Ascending aorta (tissue), 2 donors: ENCODE measurements at regions of chr1 and their contacts with region 1.

Region 1: GRCh38 chr1:63691701-63692425 is 82.0 kb upstream of the ROR1 start:
- DNase-seq: peak in 1 of 2 donors; percentile 86
- H3K4me3 ChIP-seq: no peak overlapping the region
- H3K27ac ChIP-seq: peak overlapping the region; percentile 61 to 62
- H3K4me1 ChIP-seq: peaks cover 5 to 12% of the 10 kb centered on the region in 2 donors
- H3K27me3 ChIP-seq: no peaks in the 10 kb centered on the region
- CTCF ChIP-seq: peak; percentile 82 to 84 (median 82)

Region 2: DNA sequence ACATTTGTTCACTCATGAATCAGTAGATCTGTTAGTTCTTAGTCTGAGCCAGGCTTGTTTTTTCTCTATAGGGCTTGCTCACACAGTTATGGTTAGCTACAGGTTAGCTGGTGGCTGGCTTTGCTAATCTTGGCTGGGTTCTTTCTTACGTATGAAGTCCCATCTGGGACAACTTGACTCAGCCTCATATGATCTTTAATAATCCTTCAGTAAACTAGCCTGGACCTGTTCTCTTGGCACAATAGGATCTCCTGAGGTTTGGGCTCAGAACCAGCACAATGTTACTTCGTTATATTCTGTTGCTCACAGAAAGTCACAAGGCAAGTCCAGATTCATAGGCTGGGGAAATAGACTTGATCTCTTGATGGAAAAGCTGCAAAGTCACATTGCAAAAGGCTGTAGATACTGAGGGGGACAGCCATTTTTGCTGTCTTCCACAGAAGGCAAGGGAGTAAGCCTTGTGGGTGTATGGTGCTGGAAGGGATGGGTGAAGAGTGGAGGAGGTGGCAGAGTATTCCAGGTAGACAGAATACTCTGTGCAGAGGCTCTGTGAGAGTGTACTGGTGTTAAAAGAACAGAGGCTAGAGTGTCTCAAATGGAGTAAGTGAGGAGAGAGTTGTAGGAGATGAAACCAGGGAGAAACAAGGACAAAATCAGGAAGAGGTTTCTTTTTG is 144.1 kb before region 1 on chr1:
- intact Hi-C with region 1: no loop called
- DNase-seq: no peak
- H3K4me3 ChIP-seq: no peak overlapping the region
- H3K27ac ChIP-seq: no peak overlapping the region
- H3K4me1 ChIP-seq: no peaks in the 10 kb centered on the region
- H3K27me3 ChIP-seq: no peaks in the 10 kb centered on the region
- CTCF ChIP-seq: no peak

Region 3: DNA sequence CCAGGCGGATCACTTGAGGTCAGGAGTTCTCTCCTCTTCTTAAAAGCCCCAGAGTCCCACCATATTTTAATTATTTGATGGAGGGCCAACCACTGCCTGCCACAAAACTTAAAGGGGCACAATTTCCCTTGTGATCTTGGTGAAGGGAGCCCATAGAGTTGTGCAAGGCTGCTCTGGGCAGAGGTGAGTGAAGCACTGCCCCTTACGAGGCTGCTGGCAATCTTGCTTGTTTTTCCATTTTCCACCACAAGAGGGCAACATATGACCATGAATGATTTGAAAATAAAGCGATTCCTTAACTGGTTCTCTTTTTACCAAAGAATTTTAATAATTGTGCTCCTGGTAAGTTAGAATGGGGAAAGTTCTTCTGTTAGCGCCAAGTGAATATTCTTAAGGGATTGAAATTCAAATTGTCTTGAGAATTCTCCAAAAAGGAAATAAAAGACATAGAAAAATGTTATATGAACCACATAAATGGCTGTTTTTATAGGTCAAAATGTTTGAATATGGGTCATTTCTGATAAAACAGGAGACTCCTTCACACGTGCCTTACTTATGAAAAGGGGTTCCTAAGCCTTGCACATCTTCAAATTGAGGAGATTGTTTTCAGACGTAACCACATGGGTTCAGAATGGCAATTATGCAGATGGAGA is 76.0 kb before region 1 on chr1:
- intact Hi-C with region 1: loop called (anchors 5 kb)
- DNase-seq: peak in 1 of 2 donors; percentile 87
- H3K4me3 ChIP-seq: no peak overlapping the region
- H3K27ac ChIP-seq: no peak overlapping the region
- H3K4me1 ChIP-seq: peaks cover 0 to 13% of the 10 kb centered on the region in 2 donors
- H3K27me3 ChIP-seq: no peaks in the 10 kb centered on the region
- CTCF ChIP-seq: peak; percentile 67 to 85 (median 77)

Region 4: DNA sequence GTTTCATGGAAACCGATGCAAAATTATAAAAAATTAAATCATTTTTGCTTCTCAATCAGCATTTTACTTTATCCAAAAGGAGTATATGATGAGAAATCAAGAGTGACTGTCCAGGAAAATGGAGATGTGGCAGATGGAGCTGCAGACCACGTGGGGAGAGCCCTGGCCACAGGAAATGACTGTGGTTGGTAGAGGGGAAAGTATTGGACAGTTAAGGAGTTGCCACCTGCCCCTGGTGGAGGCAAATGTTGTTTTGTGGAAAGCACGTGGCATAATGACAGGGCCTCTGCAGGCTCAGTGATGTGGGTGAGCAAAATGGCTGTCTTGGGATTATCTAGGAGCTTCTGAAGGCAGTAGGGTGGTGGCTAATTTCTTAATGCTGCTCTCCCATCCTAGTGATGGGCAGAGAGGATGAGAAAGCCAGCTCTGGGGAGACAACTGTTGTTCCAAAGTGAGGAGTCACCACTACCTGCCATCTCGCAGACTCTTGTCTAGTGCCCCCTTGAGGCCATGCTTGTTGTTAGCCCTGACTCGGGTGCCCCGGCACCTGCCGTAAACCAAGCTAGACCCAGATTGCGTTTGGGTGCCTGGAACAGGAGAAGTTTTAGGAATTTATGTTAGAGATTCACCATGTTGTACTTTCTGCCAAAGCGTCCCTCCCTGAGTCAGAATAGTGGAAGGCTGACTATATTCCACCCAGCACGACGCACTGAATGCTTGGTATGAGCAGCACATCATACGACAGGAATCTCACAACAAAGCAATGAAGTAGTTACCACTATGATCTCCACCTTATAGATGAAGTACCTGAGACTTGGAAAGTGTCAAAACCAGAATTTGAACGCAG is 225.9 kb after region 1 on chr1:
- intact Hi-C with region 1: loop called (anchors 5 kb)
- DNase-seq: peak in 1 of 2 donors; percentile 74
- H3K4me3 ChIP-seq: peak overlapping the region in 1 of 2 donors; percentile 32
- H3K27ac ChIP-seq: peak overlapping the region; percentile 72 to 85
- H3K4me1 ChIP-seq: peaks cover 2 to 44% of the 10 kb centered on the region in 2 donors
- H3K27me3 ChIP-seq: no peaks in the 10 kb centered on the region
- CTCF ChIP-seq: peak in 2 of 3 experiments; percentile 7 to 37

Region 5: GRCh38 chr1:64042331-64043100 is 350.7 kb after region 1 on chr1:
- intact Hi-C with region 1: loop called (anchors 1 kb)
- DNase-seq: peak; percentile 16 to 89
- H3K4me3 ChIP-seq: no peak overlapping the region
- H3K27ac ChIP-seq: peak overlapping the region; percentile 80 to 85
- H3K4me1 ChIP-seq: peaks cover 5 to 57% of the 10 kb centered on the region in 2 donors
- H3K27me3 ChIP-seq: no peaks in the 10 kb centered on the region
- CTCF ChIP-seq: no peak

Region 6: DNA sequence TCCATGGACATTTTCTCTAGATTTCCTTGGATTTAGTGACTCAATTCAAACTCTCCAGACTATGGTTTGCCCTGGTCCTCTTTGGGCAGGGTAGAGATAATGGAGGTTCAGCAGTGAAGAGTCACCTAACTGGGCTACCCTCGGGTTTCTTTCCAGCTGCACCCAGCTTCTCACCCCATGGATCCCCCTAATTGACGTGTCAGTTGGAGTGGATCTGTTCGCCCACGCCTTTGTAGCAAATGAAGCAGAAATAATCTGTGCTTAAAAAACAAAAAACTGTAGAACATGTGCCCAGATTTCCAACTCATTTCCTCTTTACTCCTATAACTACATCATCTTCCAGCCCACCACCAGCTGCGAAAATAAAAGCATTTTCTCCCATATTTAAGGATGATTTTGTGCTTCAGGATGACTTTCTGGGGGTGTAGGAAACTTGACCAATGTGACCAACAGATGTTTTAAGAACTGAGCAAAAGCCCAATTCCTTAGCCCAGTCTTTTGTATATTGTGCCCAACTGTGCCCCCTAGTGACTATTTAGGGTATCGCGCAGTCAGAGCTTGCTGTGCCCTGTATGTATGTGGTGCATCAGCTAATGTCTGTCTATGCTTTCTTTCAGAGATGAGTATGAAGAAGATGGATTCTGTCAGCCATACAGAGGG is 445.0 kb after region 1 on chr1:
- intact Hi-C with region 1: loop called (anchors 2 kb)
- DNase-seq: peak; percentile 23 to 90
- H3K4me3 ChIP-seq: no peak overlapping the region
- H3K27ac ChIP-seq: peak overlapping the region; percentile 37 to 64
- H3K4me1 ChIP-seq: peaks cover 4 to 42% of the 10 kb centered on the region in 2 donors
- H3K27me3 ChIP-seq: no peaks in the 10 kb centered on the region
- CTCF ChIP-seq: peak; percentile 83 to 90 (median 88)

Region 7: GRCh38 chr1:64163970-64164369 is 472.1 kb after region 1 on chr1:
- intact Hi-C with region 1: loop called (anchors 5 kb)
- DNase-seq: no peak
- H3K4me3 ChIP-seq: no peak overlapping the region
- H3K27ac ChIP-seq: peak overlapping the region; percentile 61 to 70
- H3K4me1 ChIP-seq: peaks cover 12 to 34% of the 10 kb centered on the region in 2 donors
- H3K27me3 ChIP-seq: no peaks in the 10 kb centered on the region
- CTCF ChIP-seq: peak in 2 of 3 experiments; percentile 37 to 58

Region 8: GRCh38 chr1:64242895-64243756 is 551.3 kb after region 1 on chr1:
- intact Hi-C with region 1: loop called (anchors 5 kb)
- DNase-seq: no peak
- H3K4me3 ChIP-seq: peak overlapping the region in 1 of 2 donors; percentile 4
- H3K27ac ChIP-seq: no peak overlapping the region
- H3K4me1 ChIP-seq: peaks cover 0 to 7% of the 10 kb centered on the region in 2 donors
- H3K27me3 ChIP-seq: no peaks in the 10 kb centered on the region
- CTCF ChIP-seq: peak; percentile 43 to 58 (median 44)